BJ (cell line): ENCODE measurements at regions of chr21 and their contacts with region 1.

Region 1: DNA sequence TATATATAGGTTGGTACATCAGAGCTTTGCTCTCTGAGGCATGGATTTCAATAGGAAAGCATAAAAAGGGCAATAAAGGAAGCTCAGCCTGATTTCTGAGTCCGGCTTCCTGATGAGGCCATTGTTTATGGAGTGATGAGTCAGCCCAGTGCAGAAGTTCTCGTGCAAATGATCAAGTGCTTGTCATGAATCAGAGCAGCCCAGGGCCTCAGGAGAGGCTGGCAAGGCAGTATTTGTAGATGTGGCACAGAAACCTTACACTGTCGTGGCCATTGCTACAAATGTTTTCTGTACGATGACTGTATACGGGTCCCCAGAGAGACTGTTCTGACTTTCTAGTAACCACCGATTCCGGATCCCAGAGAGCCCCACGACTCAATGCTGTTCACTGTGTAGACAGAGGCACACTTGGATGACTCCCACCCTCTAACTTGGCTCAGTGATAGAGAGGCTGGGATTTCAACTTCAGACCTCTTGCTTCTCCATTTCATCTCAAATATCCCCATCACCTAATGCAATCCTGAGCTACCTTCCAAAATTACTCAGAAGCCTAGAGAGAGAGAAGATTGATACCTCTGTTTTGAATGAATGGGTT is 26.8 kb downstream of the UMODL1 start:
- DNase-seq: peak; percentile 91
- H3K4me3 ChIP-seq: no peak overlapping the region
- H3K27me3 ChIP-seq: no peaks in the 10 kb centered on the region
- CTCF ChIP-seq: no peak

Region 2: DNA sequence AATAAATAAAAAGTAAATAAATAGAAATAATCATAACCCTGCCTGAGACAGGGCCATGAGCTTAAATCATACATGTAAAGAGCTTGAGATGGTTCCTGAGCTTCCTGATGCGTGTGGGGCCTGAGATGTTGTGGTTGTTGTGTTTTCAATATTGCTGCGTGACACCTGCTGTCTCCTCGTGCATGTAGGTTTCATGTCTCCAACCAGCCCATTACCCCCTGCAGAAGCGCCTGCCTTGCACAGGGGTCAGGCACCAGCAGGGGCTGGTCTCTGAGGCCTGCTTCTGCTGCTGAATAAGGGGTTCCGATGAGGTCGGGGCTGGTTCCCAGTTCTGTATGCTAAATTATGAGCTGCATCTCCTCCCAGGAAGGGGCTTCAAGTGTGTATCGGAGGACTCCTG is 11.0 kb before region 1 on chr21:
- CTCF ChIA-PET with region 1: interaction called, 14 read pairs
- POLR2A ChIA-PET with region 1: no interaction called
- DNase-seq: no peak
- H3K4me3 ChIP-seq: no peak overlapping the region
- H3K27me3 ChIP-seq: peaks cover 3% of the 10 kb centered on the region
- CTCF ChIP-seq: no peak

Region 3: DNA sequence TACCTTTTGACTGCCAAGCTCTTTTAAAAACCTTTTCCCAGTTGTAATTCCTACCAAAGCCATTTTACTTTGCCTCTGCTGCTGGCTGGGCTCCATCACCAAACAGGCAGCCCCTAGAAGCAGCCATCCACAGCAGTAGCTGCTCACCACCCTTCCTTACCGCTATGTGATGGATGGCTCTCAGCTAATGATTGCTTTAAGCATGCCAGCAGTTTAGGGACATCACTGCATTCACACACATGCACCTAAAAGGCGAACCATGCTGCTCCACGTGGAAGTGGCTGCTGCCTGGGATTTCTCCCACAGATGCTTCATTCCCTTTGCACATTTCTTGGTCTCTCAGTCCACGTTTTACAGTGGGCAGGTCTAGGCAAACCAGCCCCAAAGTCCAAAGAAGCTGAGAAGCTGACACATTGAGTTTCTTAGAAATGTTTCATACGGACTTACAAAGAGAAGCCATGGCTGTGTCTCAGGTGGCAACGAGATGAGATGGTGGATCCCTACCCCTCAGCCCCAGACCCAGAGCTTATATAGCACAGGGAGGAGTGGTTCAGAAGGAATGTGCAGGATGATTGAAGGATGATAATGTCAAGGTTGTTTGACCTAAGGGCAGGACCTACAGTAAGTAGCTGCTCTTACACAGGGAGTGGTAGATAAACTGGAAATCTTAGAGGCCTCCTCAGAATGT is 509.3 kb after region 1 on chr21:
- CTCF ChIA-PET with region 1: no interaction called
- POLR2A ChIA-PET with region 1: no interaction called
- DNase-seq: no peak
- H3K4me3 ChIP-seq: no peak overlapping the region
- H3K27me3 ChIP-seq: no peaks in the 10 kb centered on the region
- CTCF ChIP-seq: no peak